Activated T-helper 1 cell treated with anti-CD3 and anti-CD28 coated beads, Interleukin-12 subunit alpha, Interleukin-12 subunit beta, Interleukin-2, Interleukin-4 antibody, amounts not matched to agents 30 ng/mL and 10 ng/mL and 1 ng/mL, durations not matched to agents 14 hours and 24 hours and 36 hours (primary cell): ENCODE measurements at regions of chr1 and their contacts with region 1.

Region 1: GRCh38 chr1:41802532-41803501 is 115.9 kb downstream of the HIVEP3 start:
- DNase-seq: peak; percentile 40
- H3K4me3 Mint-ChIP-seq: peak overlapping the region; percentile 37
- H3K27ac Mint-ChIP-seq: peak overlapping the region; percentile 92
- H3K4me1 Mint-ChIP-seq: peaks cover 89% of the 10 kb centered on the region
- H3K27me3 Mint-ChIP-seq: no peaks in the 10 kb centered on the region

Region 2: DNA sequence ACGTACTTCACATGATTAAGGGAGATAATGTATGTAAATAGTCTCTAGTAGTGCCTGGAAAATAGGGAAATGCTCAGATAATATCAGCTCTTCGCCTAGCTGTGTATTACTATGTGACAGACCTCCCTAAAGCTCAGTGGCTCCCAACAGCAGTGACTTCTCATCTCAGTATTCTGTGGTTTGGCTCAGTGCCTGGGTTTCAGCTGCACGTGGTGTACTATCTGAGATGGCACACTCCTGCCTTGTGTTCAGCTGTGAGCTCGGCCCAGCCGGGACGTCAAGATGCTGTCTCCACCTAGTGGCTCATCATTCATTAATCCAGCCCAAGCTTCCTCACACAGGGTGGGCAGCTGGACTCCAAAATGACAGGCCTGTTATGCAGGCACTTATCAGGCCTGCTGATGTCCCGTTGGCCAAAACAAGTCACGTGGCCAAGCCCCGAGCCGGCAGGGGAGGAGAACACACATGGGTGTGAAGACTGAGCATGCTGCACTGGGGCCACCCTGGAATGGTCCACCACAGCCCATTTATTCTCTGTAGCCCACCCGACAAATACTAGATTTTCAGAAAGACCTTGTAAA is 799.1 kb before region 1 on chr1:
- intact Hi-C with region 1: no loop called
- DNase-seq: peak; percentile 66
- H3K4me3 Mint-ChIP-seq: no peak overlapping the region
- H3K27ac Mint-ChIP-seq: peak overlapping the region; percentile 61
- H3K4me1 Mint-ChIP-seq: peaks cover 23% of the 10 kb centered on the region
- H3K27me3 Mint-ChIP-seq: no peaks in the 10 kb centered on the region

Region 3: DNA sequence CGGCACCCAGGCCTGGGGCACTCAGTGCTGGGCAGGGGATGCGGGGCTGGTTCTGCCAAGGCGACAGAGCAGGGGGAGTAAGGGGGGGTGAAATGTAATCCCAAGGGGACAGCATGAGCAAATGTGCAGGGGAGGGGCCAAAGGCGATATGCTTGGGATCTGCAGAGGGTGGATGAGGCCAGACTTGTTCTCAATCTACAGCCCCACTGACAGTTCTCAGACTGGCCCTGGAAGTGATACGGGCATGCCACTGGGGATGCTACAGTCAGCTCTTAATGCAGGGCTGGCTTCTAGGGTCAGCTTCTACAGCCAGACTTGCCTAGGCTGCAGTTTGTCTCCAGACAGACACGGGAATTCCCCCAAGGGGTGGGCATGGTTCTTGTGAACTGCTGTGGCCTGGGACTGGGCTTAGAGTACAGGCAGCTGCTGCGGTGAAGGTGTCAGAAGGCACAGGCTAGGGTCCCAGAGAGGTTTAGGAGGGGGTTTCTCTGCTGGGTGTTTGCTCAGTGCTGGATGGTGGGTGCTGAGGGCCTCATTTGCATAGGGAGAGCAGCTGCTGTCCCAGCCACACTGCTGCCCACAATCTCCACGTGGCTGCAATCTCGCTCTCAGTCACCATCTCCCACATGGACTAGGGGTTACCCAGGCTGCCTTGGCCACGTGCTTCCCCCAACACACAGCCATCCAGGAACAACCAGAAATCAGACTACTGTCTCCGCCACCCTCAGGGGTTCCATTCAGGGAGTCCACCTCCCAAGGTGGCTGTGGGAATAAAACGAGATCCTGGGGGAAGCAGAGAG is 74.2 kb before region 1 on chr1:
- intact Hi-C with region 1: loop called (anchors 2 kb)
- DNase-seq: peak; percentile 47
- H3K4me3 Mint-ChIP-seq: peak overlapping the region; percentile 34
- H3K27ac Mint-ChIP-seq: peak overlapping the region; percentile 84
- H3K4me1 Mint-ChIP-seq: peaks cover 39% of the 10 kb centered on the region
- H3K27me3 Mint-ChIP-seq: peaks cover 1% of the 10 kb centered on the region

Region 4: GRCh38 chr1:41751804-41752513 is 50.9 kb before region 1 on chr1:
- intact Hi-C with region 1: loop called (anchors 2 kb)
- DNase-seq: no peak
- H3K4me3 Mint-ChIP-seq: peak overlapping the region; percentile 48
- H3K27ac Mint-ChIP-seq: peak overlapping the region; percentile 81
- H3K4me1 Mint-ChIP-seq: peaks cover 90% of the 10 kb centered on the region
- H3K27me3 Mint-ChIP-seq: no peaks in the 10 kb centered on the region

Region 5: GRCh38 chr1:41919764-41920397 is 117.1 kb after region 1 on chr1:
- intact Hi-C with region 1: loop called (anchors 2 kb)
- DNase-seq: peak; percentile 83
- H3K4me3 Mint-ChIP-seq: peak overlapping the region; percentile 86
- H3K27ac Mint-ChIP-seq: peak overlapping the region; percentile 95
- H3K4me1 Mint-ChIP-seq: peaks cover 59% of the 10 kb centered on the region
- H3K27me3 Mint-ChIP-seq: peaks cover 4% of the 10 kb centered on the region